B cell (primary cell): ENCODE measurements at regions of chr16 and their contacts with region 1.

Region 1: GRCh38 chr16:48542020-48542473 is 67.9 kb downstream of the N4BP1 start:
- DNase-seq: peak; percentile 62
- ATAC-seq: peak; percentile 70
- H3K4me3 ChIP-seq: no peak overlapping the region
- H3K4me3 Mint-ChIP-seq: no peak overlapping the region
- H3K27ac ChIP-seq: no peak overlapping the region
- H3K27ac Mint-ChIP-seq: peak overlapping the region; percentile 32
- H3K4me1 ChIP-seq: peaks cover 5 to 6% of the 10 kb centered on the region in 2 donors
- H3K4me1 Mint-ChIP-seq: peaks cover 6% of the 10 kb centered on the region
- H3K27me3 ChIP-seq: no peaks in the 10 kb centered on the region
- H3K27me3 Mint-ChIP-seq: no peaks in the 10 kb centered on the region
- CTCF ChIP-seq: peak; percentile 73

Region 2: GRCh38 chr16:48244080-48244862 is 297.8 kb before region 1 on chr16 and contains the start of gene LONP2:
- CTCF ChIA-PET with region 1: no interaction called
- POLR2A ChIA-PET with region 1: no interaction called
- intact Hi-C with region 1: loop called (anchors 10 kb)
- DNase-seq: peak; percentile 91
- ATAC-seq: peak; percentile 96
- H3K4me3 ChIP-seq: peak within 1 kb of the TSS; percentile 60 to 87 (median 78)
- H3K4me3 Mint-ChIP-seq: peak within 1 kb of the TSS; percentile 91
- H3K27ac ChIP-seq: peak within 1 kb of the TSS; percentile 78 to 90
- H3K27ac Mint-ChIP-seq: peak within 1 kb of the TSS; percentile 79
- H3K4me1 ChIP-seq: peaks cover 16 to 22% of the 10 kb centered on the region in 2 donors
- H3K4me1 Mint-ChIP-seq: peaks cover 27% of the 10 kb centered on the region
- H3K27me3 ChIP-seq: no peaks in the 10 kb centered on the region
- H3K27me3 Mint-ChIP-seq: no peaks in the 10 kb centered on the region
- CTCF ChIP-seq: no peak
- total RNA-seq, gene LONP2: 84.2 and 87.2 TPM in 2 replicates

Region 3: GRCh38 chr16:48636521-48636920 is 94.5 kb after region 1 on chr16:
- CTCF ChIA-PET with region 1: no interaction called
- POLR2A ChIA-PET with region 1: no interaction called
- intact Hi-C with region 1: no loop called
- DNase-seq: no peak
- ATAC-seq: no peak
- H3K4me3 ChIP-seq: no peak overlapping the region
- H3K4me3 Mint-ChIP-seq: no peak overlapping the region
- H3K27ac ChIP-seq: no peak overlapping the region
- H3K27ac Mint-ChIP-seq: no peak overlapping the region
- H3K4me1 ChIP-seq: no peaks in the 10 kb centered on the region
- H3K4me1 Mint-ChIP-seq: no peaks in the 10 kb centered on the region
- H3K27me3 ChIP-seq: no peaks in the 10 kb centered on the region
- H3K27me3 Mint-ChIP-seq: peaks cover 20% of the 10 kb centered on the region
- CTCF ChIP-seq: no peak

Region 4: GRCh38 chr16:49194537-49195236 is 652.6 kb after region 1 on chr16:
- CTCF ChIA-PET with region 1: no interaction called
- POLR2A ChIA-PET with region 1: no interaction called
- intact Hi-C with region 1: no loop called
- DNase-seq: no peak
- ATAC-seq: no peak
- H3K4me3 ChIP-seq: no peak overlapping the region
- H3K4me3 Mint-ChIP-seq: no peak overlapping the region
- H3K27ac ChIP-seq: no peak overlapping the region
- H3K27ac Mint-ChIP-seq: no peak overlapping the region
- H3K4me1 ChIP-seq: no peaks in the 10 kb centered on the region
- H3K4me1 Mint-ChIP-seq: no peaks in the 10 kb centered on the region
- H3K27me3 ChIP-seq: no peaks in the 10 kb centered on the region
- H3K27me3 Mint-ChIP-seq: no peaks in the 10 kb centered on the region
- CTCF ChIP-seq: no peak